Gastrocnemius medialis (tissue), 4 donors: ENCODE measurements at regions of chr2 and their contacts with region 1.

Region 1: GRCh38 chr2:98175811-98176210 is 88.8 kb downstream of the VWA3B start:
- DNase-seq: peak in 1 of 2 donors; percentile 29
- ATAC-seq: peak in 1 of 2 donors; percentile 34
- H3K4me3 ChIP-seq: no peak overlapping the region
- H3K27ac ChIP-seq: no peak overlapping the region
- H3K4me1 ChIP-seq: peaks cover 4% of the 10 kb centered on the region in 2 donors
- H3K27me3 ChIP-seq: no peaks in the 10 kb centered on the region
- CTCF ChIP-seq: peak in 1 of 5 experiments; percentile 35
- POLR2A ChIP-seq: no peak

Region 2: DNA sequence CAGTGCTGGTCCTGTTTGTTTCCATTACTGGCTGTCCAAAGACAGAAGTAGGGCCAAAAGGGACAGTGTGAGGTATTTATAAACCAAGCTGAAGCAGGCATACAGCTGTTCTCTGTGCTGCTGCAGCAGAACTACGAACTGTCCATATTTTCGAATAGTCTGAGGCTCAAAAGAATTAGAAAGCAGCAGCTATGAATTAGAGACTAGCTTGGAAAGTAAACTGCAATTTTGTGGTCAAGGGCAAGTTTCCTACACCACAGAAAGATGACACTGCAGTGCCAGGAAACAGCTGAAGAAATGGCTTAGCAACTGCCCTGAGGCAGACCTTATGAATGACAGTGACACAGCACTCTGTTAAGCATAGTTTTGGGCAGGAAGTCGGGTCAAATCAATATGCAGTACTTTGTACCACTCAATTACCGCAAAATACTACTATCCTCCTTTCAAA is 305.4 kb before region 1 on chr2:
- in situ Hi-C with region 1: no loop called
- intact Hi-C with region 1: loop called (anchors 5 kb)
- DNase-seq: peak; percentile 60 to 63
- ATAC-seq: peak; percentile 85 to 90
- H3K4me3 ChIP-seq: peak overlapping the region in 3 of 4 donors; percentile 16 to 31 (median 30)
- H3K27ac ChIP-seq: peak overlapping the region; percentile 88 to 95 (median 92)
- H3K4me1 ChIP-seq: peaks cover 58 to 65% of the 10 kb centered on the region in 2 donors
- H3K27me3 ChIP-seq: no peaks in the 10 kb centered on the region
- CTCF ChIP-seq: no peak
- POLR2A ChIP-seq: peak in 1 of 2 donors; percentile 18

Region 3: DNA sequence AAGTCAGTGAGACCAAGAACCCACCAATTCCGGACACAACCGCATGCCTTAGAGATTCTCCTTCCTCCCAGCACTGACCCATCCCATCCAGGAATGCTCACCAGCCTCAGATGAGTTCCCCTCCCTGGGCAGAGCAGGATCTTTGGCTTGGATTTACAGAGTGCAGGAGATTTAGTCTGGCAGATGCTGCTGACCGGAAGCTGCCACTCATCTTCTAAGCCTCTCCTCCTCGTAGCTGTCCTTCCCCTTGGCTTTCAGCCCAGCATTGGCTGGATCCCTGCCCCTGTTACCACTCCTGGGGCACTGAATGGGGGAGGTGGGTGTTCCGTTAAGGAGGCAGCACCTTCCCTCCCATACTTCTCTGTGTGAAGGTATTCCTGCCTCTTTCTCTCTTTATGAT is 35.6 kb before region 1 on chr2:
- in situ Hi-C with region 1: no loop called
- intact Hi-C with region 1: no loop called
- DNase-seq: no peak
- ATAC-seq: no peak
- H3K4me3 ChIP-seq: peak overlapping the region in 1 of 4 donors; percentile 22
- H3K27ac ChIP-seq: no peak overlapping the region
- H3K4me1 ChIP-seq: peaks cover 0 to 3% of the 10 kb centered on the region in 2 donors
- H3K27me3 ChIP-seq: no peaks in the 10 kb centered on the region
- CTCF ChIP-seq: no peak
- POLR2A ChIP-seq: no peak